ENCODE measurements at regions of chr6 and their contacts with region 1.

Region 1: DNA sequence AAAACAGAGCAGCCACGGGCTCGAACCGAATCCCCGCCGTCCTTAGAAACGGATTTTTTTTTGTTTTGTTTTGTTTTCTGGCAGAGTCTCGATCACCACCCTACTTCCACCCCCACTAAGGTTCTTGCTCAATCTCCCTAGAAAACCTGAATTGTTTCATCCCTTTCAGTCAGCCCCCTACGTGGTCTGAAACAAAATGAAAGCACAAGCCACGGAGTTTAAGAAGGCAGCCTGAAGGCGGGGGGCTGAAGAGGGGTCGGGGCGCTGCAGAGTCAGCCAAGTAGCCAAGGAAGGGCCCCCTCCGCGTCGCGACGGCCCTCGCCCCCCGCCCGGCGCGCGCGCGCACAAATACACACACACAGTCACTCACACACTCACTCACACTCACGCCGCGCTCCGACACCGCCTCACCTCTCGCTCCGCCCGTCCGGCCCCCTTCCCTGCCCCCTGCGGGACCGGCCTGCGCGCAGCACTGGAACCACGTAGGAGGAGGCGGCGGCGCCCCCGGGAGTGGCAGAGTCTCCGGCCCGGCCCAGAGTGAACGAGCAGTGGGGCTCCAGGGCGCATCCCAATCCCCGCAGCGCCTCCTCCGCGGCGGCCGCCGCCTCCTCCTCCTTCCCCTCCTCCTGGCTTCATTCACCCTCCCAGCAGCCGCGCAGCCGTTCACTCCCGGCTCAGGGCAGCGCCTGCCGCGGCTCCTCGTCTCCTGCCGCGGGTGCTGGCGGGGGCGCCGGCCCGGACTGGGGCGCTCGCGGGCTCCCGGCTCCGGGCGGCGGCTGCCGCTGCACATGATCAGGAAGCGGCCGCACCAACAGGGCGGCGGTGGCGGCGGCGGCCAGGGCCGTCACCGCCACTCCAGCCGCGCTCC is 1.4 kb downstream of the ATXN1 start:
- DNase-seq: peak; percentile 85 to 90 (median 89)
- ATAC-seq: peak; percentile 58
- H3K4me3 ChIP-seq: peak overlapping the region; percentile 60 to 73
- H3K27ac ChIP-seq: peak overlapping the region; percentile 93 to 99 (median 97)
- H3K4me1 ChIP-seq: peaks cover 18% of the 10 kb centered on the region
- H3K27me3 ChIP-seq: no peaks in the 10 kb centered on the region
- CTCF ChIP-seq: peak in 4 of 7 experiments; percentile 13 to 26 (median 22)
- POLR2A ChIP-seq: peak; percentile 93 to 96 (median 95)

Region 2: GRCh38 chr6:16338577-16339262 is 421.2 kb before region 1 on chr6:
- intact Hi-C with region 1: loop called (anchors 5 kb)
- DNase-seq: peak; percentile 30 to 59 (median 52)
- ATAC-seq: peak; percentile 31
- H3K4me3 ChIP-seq: no peak overlapping the region
- H3K27ac ChIP-seq: no peak overlapping the region
- H3K4me1 ChIP-seq: peaks cover 5% of the 10 kb centered on the region
- H3K27me3 ChIP-seq: no peaks in the 10 kb centered on the region
- CTCF ChIP-seq: no peak
- POLR2A ChIP-seq: no peak

Region 3: DNA sequence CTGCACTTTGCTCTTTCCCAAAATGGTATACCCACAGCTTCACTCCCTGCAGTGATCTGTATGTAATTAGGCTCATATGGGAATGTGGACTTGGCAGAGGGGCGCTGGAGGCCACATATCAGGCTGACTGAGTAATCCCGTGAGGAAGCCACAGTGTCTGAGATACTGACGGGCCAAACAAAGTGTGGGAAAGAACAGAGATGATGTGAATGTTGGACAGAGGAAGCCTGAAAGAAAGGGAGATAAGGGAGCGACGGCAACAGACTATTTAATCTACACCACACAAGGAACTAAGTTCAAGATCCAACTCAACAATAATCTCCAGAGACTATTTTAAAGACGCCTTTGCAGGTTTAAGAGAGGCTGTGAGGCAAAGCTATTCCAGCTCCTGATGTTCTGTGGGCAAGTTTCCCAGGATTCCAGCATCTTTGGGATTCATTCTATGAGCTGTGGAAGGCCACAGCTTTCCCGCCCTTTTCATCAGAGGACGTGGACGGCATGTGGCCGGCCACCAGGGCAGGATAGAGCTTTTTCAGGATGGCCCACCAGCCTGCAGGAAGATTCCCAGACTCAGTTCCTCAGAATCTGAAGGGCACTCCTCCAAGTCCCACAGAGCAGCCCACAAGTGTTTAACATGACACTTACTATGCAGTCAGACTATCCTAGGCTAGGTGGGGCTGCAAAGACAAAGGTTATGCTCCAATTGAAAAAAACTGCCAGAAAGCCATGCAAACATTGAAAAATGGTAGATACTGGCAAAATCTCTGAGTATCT is 236.1 kb before region 1 on chr6:
- intact Hi-C with region 1: no loop called
- DNase-seq: no peak
- ATAC-seq: no peak
- H3K4me3 ChIP-seq: no peak overlapping the region
- H3K27ac ChIP-seq: no peak overlapping the region
- H3K4me1 ChIP-seq: peaks cover 9% of the 10 kb centered on the region
- H3K27me3 ChIP-seq: no peaks in the 10 kb centered on the region
- CTCF ChIP-seq: no peak
- POLR2A ChIP-seq: no peak

Region 4: DNA sequence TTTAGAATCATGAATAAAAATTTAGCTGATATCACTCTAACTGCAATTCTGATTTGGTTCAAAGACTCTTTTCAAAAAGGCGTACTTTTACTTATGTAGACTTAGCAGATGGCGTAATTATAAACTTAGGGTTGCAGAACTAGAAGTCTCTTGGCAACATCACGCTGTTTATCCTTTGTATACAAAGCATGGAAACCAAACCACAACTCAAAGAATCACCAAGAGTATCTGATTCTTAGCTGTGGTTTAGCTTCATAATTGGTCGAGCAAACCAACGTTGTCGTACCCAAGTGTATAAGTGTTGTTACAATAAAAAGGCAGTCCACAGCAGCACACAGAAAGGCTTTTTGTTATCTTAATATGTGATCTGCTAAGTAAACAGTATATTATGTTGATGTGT is 360.1 kb after region 1 on chr6:
- intact Hi-C with region 1: no loop called
- DNase-seq: no peak
- ATAC-seq: no peak
- H3K4me3 ChIP-seq: no peak overlapping the region
- H3K27ac ChIP-seq: no peak overlapping the region
- H3K4me1 ChIP-seq: no peaks in the 10 kb centered on the region
- H3K27me3 ChIP-seq: no peaks in the 10 kb centered on the region
- CTCF ChIP-seq: no peak
- POLR2A ChIP-seq: no peak

Measured in body of pancreas (tissue), 4 donors.